Transverse colon (tissue), 4 donors: ENCODE measurements at regions of chr15 and their contacts with region 1.

Region 1: DNA sequence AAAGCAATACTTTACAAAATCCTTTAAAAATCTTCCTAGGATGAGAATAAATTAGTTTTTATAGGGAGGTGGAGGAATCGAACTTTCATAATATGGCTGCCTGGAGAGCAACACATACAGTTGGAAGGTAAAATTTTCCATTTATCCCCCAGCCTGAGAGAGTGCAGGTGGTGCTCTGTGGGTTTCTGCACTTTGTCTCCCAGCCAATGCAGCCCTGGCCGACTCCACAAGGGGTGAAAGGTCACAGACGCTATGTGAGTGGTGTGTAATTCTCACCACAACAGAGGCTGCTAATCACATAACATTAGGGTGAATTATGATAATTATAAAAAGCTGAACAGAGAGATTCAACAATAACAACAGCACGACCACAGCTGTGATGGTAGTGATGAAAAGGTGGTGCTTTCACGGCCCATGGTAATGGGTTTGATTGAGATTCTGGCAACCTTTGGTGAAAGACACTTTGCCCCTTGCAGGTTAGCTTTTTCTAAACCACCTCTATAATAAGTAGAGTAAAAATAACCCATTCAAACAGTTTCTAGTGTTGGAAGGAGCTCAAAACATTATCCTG is 30.1 kb upstream of the NANOGP8 start:
- DNase-seq: no peak
- H3K4me3 ChIP-seq: no peak overlapping the region
- H3K27ac ChIP-seq: no peak overlapping the region
- H3K4me1 ChIP-seq: no peaks in the 10 kb centered on the region
- H3K27me3 ChIP-seq: no peaks in the 10 kb centered on the region
- CTCF ChIP-seq: no peak
- EP300 ChIP-seq: no peak
- POLR2A ChIP-seq: no peak

Region 2: GRCh38 chr15:36707884-36708435 is 1592.7 kb after region 1 on chr15:
- in situ Hi-C with region 1: no loop called
- intact Hi-C with region 1: loop called (anchors 5 kb)
- DNase-seq: no peak
- H3K4me3 ChIP-seq: no peak overlapping the region
- H3K27ac ChIP-seq: no peak overlapping the region
- H3K4me1 ChIP-seq: no peaks in the 10 kb centered on the region
- H3K27me3 ChIP-seq: no peaks in the 10 kb centered on the region
- CTCF ChIP-seq: no peak
- EP300 ChIP-seq: no peak
- POLR2A ChIP-seq: no peak